ENCODE measurements at regions of chr2 and their contacts with region 1.

Region 1: DNA sequence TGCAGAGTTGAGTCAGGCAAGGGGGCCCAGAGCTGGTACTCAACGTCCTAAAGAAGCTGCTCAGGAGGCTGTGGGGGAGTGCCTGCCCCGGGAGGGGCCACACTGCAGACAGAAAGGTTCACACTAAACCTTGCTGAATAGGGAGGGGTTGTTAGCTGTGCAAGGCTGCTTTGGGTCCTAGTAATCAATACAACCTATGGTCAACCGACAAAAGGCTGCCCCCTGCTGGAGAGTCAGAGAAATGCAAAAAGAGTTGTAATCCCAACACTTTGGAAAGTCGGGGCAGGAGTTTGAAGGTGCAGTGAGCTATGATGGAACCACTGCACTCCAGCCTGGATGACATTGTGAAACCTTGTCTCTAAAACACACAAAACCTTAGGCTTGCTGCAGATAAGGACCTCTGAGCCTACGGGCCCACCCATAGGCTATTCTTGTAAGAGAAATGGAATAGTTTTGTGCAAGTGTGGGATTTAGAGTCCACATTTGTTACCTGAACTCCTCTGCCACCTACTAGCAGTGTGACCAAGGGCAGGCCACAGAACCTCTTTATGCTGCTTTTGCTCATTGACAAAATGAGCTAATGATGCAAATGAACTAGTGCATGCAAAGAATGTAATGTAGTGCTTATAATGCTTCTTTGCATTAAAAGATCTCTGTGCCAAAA is 81.5 kb downstream of the PRPF40A start:
- DNase-seq: no peak
- ATAC-seq: peak; percentile 89
- H3K4me3 ChIP-seq: no peak overlapping the region
- H3K27ac ChIP-seq: no peak overlapping the region
- H3K4me1 ChIP-seq: no peaks in the 10 kb centered on the region
- H3K27me3 ChIP-seq: no peaks in the 10 kb centered on the region
- CTCF ChIP-seq: peak; percentile 73 to 84 (median 75)
- EP300 ChIP-seq: no peak
- POLR2A ChIP-seq: no peak
- RAD21 ChIP-seq: peak; percentile 86

Region 2: GRCh38 chr2:152097801-152098495 is 537.8 kb before region 1 on chr2:
- CTCF ChIA-PET with region 1: no interaction called
- POLR2A ChIA-PET with region 1: no interaction called
- RAD21 ChIA-PET with region 1: no interaction called
- SMC1A ChIA-PET with region 1: no interaction called
- in situ Hi-C with region 1: no loop called
- intact Hi-C with region 1: no loop called
- DNase-seq: no peak
- ATAC-seq: peak; percentile 65
- H3K4me3 ChIP-seq: peak overlapping the region; percentile 76
- H3K27ac ChIP-seq: no peak overlapping the region
- H3K4me1 ChIP-seq: peaks cover 8% of the 10 kb centered on the region
- H3K27me3 ChIP-seq: peaks cover 5% of the 10 kb centered on the region in 2 experiments; a peak in 2 of 4 replicates
- CTCF ChIP-seq: no peak
- EP300 ChIP-seq: no peak
- POLR2A ChIP-seq: no peak
- RAD21 ChIP-seq: no peak

Region 3: GRCh38 chr2:152175458-152176325 is 460.1 kb before region 1 on chr2 and contains the start of gene STAM2:
- CTCF ChIA-PET with region 1: interaction called, 59 read pairs
- POLR2A ChIA-PET with region 1: interaction called, 4 read pairs
- RAD21 ChIA-PET with region 1: interaction called, 42 read pairs
- SMC1A ChIA-PET with region 1: interaction called, 16 read pairs
- in situ Hi-C with region 1: no loop called
- intact Hi-C with region 1: loop called (anchors 1 kb)
- DNase-seq: peak; percentile 72
- ATAC-seq: peak; percentile 85
- H3K4me3 ChIP-seq: peak within 1 kb of the TSS; percentile 80
- H3K27ac ChIP-seq: peak within 1 kb of the TSS; percentile 99
- H3K4me1 ChIP-seq: peaks cover 8% of the 10 kb centered on the region; the same call in 1 of the 2 replicates
- H3K27me3 ChIP-seq: no peaks in the 10 kb centered on the region
- CTCF ChIP-seq: peak; percentile 96 to 99 (median 98); a peak in 5 of 6 replicates
- EP300 ChIP-seq: no peak; a peak in 1 of 4 replicates
- POLR2A ChIP-seq: peak; percentile 93
- RAD21 ChIP-seq: peak; percentile 84
- polyA plus RNA-seq, gene STAM2: 4.4 to 7.8 TPM

Region 4: GRCh38 chr2:152335010-152335725 is 300.6 kb before region 1 on chr2 and contains the start of gene FMNL2:
- CTCF ChIA-PET with region 1: interaction called, 4 read pairs
- POLR2A ChIA-PET with region 1: no interaction called
- RAD21 ChIA-PET with region 1: interaction called, 5 read pairs
- SMC1A ChIA-PET with region 1: interaction called, 3 read pairs
- in situ Hi-C with region 1: no loop called
- intact Hi-C with region 1: loop called (anchors 5 kb)
- DNase-seq: peak; percentile 24
- ATAC-seq: peak; percentile 90
- H3K4me3 ChIP-seq: peak within 1 kb of the TSS; percentile 76
- H3K27ac ChIP-seq: peak within 1 kb of the TSS; percentile 35; the same call in 1 of the 2 replicates
- H3K4me1 ChIP-seq: no peaks in the 10 kb centered on the region
- H3K27me3 ChIP-seq: no peaks in the 10 kb centered on the region
- CTCF ChIP-seq: 0 out of 6 replicates have a peak, but pooled peaks of 1 of the 3 experiments have one; percentile 5
- EP300 ChIP-seq: no peak
- POLR2A ChIP-seq: 0 out of 2 replicates have a peak, but pooled peaks have one; percentile 67
- RAD21 ChIP-seq: no peak
- polyA plus RNA-seq, gene FMNL2: 0.13 to 0.19 TPM

Region 5: DNA sequence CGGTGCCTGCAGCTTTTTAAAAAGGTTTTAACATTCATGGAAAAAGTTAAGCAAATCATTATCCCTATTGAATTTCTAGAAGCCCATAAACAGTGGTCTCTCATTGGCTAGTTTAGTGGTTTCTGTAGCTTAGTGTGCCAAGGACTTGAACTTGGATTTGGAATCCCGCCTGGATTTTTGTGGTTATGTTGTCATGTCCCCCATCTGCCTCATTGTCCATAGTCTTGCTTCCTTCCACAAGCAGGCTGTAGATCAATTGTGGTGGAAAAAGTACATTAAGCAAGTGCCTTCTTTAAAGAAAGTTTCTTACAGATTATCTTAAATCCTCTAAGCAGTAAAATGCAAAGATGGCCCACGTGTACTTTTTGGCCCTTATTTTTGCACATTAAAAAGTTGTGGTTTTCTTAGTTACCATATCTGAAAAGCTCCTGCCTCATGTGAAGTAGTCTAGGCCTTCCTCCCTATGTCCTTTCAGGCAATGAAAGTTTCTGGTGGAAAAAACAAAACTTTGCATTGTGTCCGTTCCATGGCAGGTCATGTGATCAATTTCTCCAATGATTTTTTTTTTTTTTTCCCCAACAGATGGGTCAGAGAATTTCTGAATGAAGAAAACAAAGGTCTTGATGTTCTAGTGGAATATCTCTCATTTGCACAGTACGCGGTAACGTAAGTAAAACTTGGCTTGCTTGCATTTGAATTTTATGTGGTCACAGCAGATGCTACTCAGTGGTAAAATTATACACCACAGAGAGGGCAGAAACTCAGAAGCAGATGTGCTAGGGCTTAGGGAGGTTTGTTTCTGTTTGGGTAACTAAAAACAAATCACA is 77.4 kb before region 1 on chr2:
- CTCF ChIA-PET with region 1: interaction called, 18 read pairs
- POLR2A ChIA-PET with region 1: no interaction called
- RAD21 ChIA-PET with region 1: interaction called, 4 read pairs
- SMC1A ChIA-PET with region 1: interaction called, 13 read pairs
- in situ Hi-C with region 1: no loop called
- intact Hi-C with region 1: no loop called
- DNase-seq: no peak
- ATAC-seq: no peak
- H3K4me3 ChIP-seq: no peak overlapping the region
- H3K27ac ChIP-seq: no peak overlapping the region
- H3K4me1 ChIP-seq: no peaks in the 10 kb centered on the region
- H3K27me3 ChIP-seq: no peaks in the 10 kb centered on the region
- CTCF ChIP-seq: no peak
- EP300 ChIP-seq: no peak
- POLR2A ChIP-seq: no peak
- RAD21 ChIP-seq: no peak

Region 6: GRCh38 chr2:152611458-152612231 is 24.1 kb before region 1 on chr2:
- CTCF ChIA-PET with region 1: interaction called, 42 read pairs
- POLR2A ChIA-PET with region 1: no interaction called
- RAD21 ChIA-PET with region 1: interaction called, 19 read pairs
- SMC1A ChIA-PET with region 1: interaction called, 20 read pairs
- in situ Hi-C with region 1: no loop called
- intact Hi-C with region 1: no loop called
- DNase-seq: peak; percentile 64
- ATAC-seq: peak; percentile 88
- H3K4me3 ChIP-seq: peak overlapping the region; percentile 49; the same call in 1 of the 2 replicates
- H3K27ac ChIP-seq: peak overlapping the region; percentile 64
- H3K4me1 ChIP-seq: peaks cover 20% of the 10 kb centered on the region
- H3K27me3 ChIP-seq: no peaks in the 10 kb centered on the region
- CTCF ChIP-seq: no peak
- EP300 ChIP-seq: peak in 1 of 2 experiments; percentile 71; a peak in 2 of 4 replicates
- POLR2A ChIP-seq: no peak
- RAD21 ChIP-seq: no peak

Region 7: GRCh38 chr2:152717228-152718075 is 81.7 kb after region 1 on chr2 and contains the start of gene PRPF40A:
- CTCF ChIA-PET with region 1: interaction called, 6 read pairs
- POLR2A ChIA-PET with region 1: interaction called, 10 read pairs
- RAD21 ChIA-PET with region 1: no interaction called
- SMC1A ChIA-PET with region 1: no interaction called
- in situ Hi-C with region 1: no loop called
- intact Hi-C with region 1: no loop called
- DNase-seq: peak; percentile 92
- ATAC-seq: peak; percentile 82
- H3K4me3 ChIP-seq: peak within 1 kb of the TSS; percentile 81
- H3K27ac ChIP-seq: peak within 1 kb of the TSS; percentile 95
- H3K4me1 ChIP-seq: no peaks in the 10 kb centered on the region
- H3K27me3 ChIP-seq: no peaks in the 10 kb centered on the region
- CTCF ChIP-seq: no peak
- EP300 ChIP-seq: peak in 1 of 2 experiments; percentile 16; a peak in 1 of 4 replicates
- POLR2A ChIP-seq: peak; percentile 93
- RAD21 ChIP-seq: no peak
- polyA plus RNA-seq, gene PRPF40A: 97.8 to 117 TPM

Measured in GM12878 (cell line).